Heart left ventricle (tissue), 16 donors: ENCODE measurements at regions of chr9 and their contacts with region 1.

Region 1: DNA sequence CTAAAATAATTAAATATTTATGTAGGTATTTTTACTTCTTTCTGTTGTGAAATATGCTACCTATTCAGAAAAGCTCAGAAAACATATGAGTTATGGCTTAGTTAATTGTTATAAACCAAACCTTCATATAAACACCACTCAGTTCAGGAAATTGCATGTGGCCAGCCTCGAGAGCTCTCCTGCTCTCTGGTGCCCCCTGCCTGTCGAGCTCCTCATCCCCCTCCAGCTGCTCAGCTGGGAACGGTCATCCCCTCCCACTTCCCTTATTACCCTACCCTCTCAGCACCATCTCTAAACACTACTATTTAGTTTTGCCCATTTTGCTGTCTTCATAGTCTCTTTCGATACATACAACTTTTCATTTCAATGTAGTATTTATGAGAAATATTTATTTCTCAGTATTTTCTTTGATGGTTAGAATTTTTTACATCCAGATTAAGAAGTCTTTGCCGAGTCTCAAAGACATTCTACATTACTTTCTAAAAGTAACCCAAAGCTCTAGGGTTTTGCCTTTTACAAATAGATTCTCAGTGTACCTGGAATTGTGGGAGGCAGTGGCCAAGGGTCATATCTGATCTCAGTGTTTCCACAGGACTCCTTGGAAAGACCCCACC is 51.2 kb upstream of the SEMA4D start:
- DNase-seq: peak; percentile 71 to 90 (median 76)
- ATAC-seq: peak; percentile 86 to 96 (median 94)
- H3K4me3 ChIP-seq: no peak overlapping the region
- H3K27ac ChIP-seq: no peak overlapping the region
- H3K4me1 ChIP-seq: peaks cover 0 to 18% (median 0%) of the 10 kb centered on the region in 12 donors
- H3K27me3 ChIP-seq: no peaks in the 10 kb centered on the region
- CTCF ChIP-seq: peak; percentile 80 to 96 (median 91)
- POLR2A ChIP-seq: no peak

Region 2: DNA sequence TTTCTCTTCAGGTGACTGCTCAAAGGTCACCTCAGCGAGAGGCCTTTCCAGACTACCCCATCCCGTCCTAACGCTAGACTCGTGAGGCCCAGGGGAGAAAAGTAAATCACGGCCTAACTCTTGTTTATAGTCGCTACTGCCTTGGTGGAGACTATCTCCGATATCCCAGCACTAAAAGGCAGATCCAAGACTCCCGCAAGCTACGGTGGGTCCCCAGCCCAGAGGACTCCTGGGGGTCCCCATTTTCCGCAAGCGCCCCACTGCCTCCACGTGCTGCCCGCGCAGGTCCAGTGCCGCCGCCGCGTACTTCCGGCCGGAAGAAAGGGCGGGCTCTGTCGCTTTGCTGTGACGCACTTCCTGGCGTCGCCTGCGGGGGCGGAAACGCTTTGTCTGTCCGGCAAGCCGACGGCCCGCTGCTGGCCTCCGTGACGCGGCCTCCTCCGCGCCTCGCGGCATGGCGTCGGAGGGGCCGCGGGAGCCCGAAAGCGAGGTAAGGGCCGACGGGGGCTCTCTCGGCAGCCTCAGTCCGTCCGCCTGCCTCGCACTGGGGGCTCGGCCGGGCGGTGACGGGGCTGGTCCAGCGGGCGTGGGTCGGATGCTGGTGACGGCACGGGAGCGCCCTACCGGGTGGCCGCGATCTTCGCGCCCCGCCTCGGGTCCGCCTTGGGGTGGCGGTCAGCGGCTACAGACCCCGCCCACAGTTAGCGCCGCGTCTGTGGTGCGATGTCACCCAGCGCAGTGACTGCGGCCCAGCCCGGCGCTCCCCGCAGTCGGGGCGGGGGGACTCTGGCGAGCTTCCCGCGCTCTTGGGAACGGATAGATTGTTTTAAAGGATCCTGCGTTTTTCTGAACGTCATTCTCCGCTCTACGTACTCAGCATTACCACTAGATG is 230.8 kb before region 1 on chr9 and contains the start of gene SECISBP2:
- intact Hi-C with region 1: loop called (anchors 1 to 5 kb)
- DNase-seq: peak; percentile 96 to 98 (median 98)
- ATAC-seq: peak; percentile 98 to 99 (median 99)
- H3K4me3 ChIP-seq: peak within 1 kb of the TSS; percentile 51 to 94 (median 74)
- H3K27ac ChIP-seq: peak within 1 kb of the TSS; percentile 94 to 100 (median 99)
- H3K4me1 ChIP-seq: peaks cover 5 to 70% (median 36%) of the 10 kb centered on the region in 12 donors
- H3K27me3 ChIP-seq: no peaks in the 10 kb centered on the region
- CTCF ChIP-seq: peak in 10 of 12 donors; percentile 68 to 95 (median 80)
- POLR2A ChIP-seq: peak; percentile 64 to 93
- total RNA-seq, gene SECISBP2: 13.0 to 25.3 (median 15.5) TPM

Region 3: GRCh38 chr9:89323390-89323789 is 225.7 kb before region 1 on chr9:
- intact Hi-C with region 1: loop called (anchors 1 to 5 kb)
- DNase-seq: no peak
- ATAC-seq: no peak
- H3K4me3 ChIP-seq: no peak overlapping the region
- H3K27ac ChIP-seq: no peak overlapping the region
- H3K4me1 ChIP-seq: peaks cover 5 to 49% (median 31%) of the 10 kb centered on the region in 12 donors
- H3K27me3 ChIP-seq: no peaks in the 10 kb centered on the region
- CTCF ChIP-seq: no peak
- POLR2A ChIP-seq: no peak

Region 4: DNA sequence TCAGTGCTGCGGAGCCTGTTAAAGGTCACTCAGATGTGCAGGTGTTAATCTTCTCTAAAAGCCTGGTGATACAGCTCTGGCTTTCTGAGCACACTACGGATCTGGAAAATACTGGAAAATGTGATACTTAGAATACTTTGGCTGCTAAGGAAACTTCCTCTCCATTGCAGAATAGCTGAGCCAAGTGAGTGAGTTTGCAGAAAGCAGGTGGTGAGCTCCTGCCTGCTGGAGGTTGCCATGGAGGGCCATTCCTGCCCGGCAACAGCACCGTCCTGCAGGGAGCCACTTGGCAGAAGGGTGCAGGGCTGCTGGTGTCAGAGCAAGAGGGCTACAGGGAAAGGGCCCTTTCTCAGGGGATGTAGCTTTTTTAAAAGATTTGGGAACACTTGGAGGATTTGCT is 190.2 kb before region 1 on chr9:
- intact Hi-C with region 1: loop called in 3 of 10 experiments (anchors 10 kb)
- DNase-seq: peak in 1 of 5 donors; percentile 56
- ATAC-seq: peak; percentile 54 to 80 (median 59)
- H3K4me3 ChIP-seq: no peak overlapping the region
- H3K27ac ChIP-seq: peak overlapping the region in 4 of 12 donors; percentile 12 to 17 (median 14)
- H3K4me1 ChIP-seq: peaks cover 0 to 34% (median 19%) of the 10 kb centered on the region in 12 donors
- H3K27me3 ChIP-seq: no peaks in the 10 kb centered on the region
- CTCF ChIP-seq: no peak
- POLR2A ChIP-seq: no peak

Region 5: GRCh38 chr9:89375191-89375760 is 173.9 kb before region 1 on chr9:
- intact Hi-C with region 1: loop called in 5 of 10 experiments (anchors 5 to 10 kb)
- DNase-seq: no peak
- ATAC-seq: peak in 3 of 4 donors; percentile 9 to 24 (median 14)
- H3K4me3 ChIP-seq: no peak overlapping the region
- H3K27ac ChIP-seq: no peak overlapping the region
- H3K4me1 ChIP-seq: peaks cover 0 to 21% (median 0%) of the 10 kb centered on the region in 12 donors
- H3K27me3 ChIP-seq: no peaks in the 10 kb centered on the region
- CTCF ChIP-seq: no peak
- POLR2A ChIP-seq: no peak

Region 6: GRCh38 chr9:89388084-89388867 is 160.9 kb before region 1 on chr9:
- intact Hi-C with region 1: loop called in 4 of 10 experiments (anchors 10 kb)
- DNase-seq: peak in 4 of 5 donors; percentile 27 to 63 (median 41)
- ATAC-seq: peak; percentile 52 to 72 (median 70)
- H3K4me3 ChIP-seq: no peak overlapping the region
- H3K27ac ChIP-seq: peak overlapping the region in 7 of 12 donors; percentile 25 to 83 (median 41)
- H3K4me1 ChIP-seq: peaks cover 0 to 22% (median 3%) of the 10 kb centered on the region in 12 donors
- H3K27me3 ChIP-seq: no peaks in the 10 kb centered on the region
- CTCF ChIP-seq: no peak
- POLR2A ChIP-seq: no peak

Region 7: GRCh38 chr9:89410641-89411350 is 138.3 kb before region 1 on chr9:
- intact Hi-C with region 1: loop called in 1 of 10 experiments (anchors 10 kb)
- DNase-seq: no peak
- ATAC-seq: no peak
- H3K4me3 ChIP-seq: no peak overlapping the region
- H3K27ac ChIP-seq: no peak overlapping the region
- H3K4me1 ChIP-seq: peaks cover 0 to 63% (median 8%) of the 10 kb centered on the region in 12 donors
- H3K27me3 ChIP-seq: no peaks in the 10 kb centered on the region
- CTCF ChIP-seq: no peak
- POLR2A ChIP-seq: no peak